Gastrocnemius medialis (tissue), 4 donors: ENCODE measurements at regions of chr10 and their contacts with region 1.

Region 1: GRCh38 chr10:73644015-73644743 is 2.9 kb upstream of the MYOZ1 start:
- DNase-seq: peak in 1 of 2 donors; percentile 9
- ATAC-seq: peak; percentile 31 to 32
- H3K4me3 ChIP-seq: peak overlapping the region in 1 of 4 donors; percentile 18
- H3K27ac ChIP-seq: peak overlapping the region; percentile 96 to 99 (median 98)
- H3K4me1 ChIP-seq: peaks cover 77 to 81% of the 10 kb centered on the region in 2 donors
- H3K27me3 ChIP-seq: no peaks in the 10 kb centered on the region
- CTCF ChIP-seq: peak; percentile 88 to 96 (median 90)
- POLR2A ChIP-seq: no peak

Region 2: DNA sequence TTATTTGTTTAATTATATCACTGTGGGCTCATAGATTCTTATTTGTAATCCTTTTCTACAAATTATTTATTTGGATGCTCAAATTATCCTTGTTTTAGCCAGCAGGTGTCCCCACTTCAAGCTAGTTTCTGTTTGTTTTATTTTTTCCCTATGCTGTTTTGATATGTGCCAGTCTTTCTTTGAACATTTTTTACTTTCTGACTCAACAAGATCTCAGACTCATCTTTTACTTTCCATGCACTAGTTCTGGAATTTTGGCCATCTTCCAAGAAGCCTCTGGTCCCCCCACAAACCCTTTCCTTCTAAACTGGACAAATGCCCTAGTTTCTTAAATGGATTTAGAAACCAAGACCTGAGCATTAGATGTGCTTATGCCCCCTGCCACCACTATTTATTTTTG is 380.2 kb before region 1 on chr10:
- in situ Hi-C with region 1: loop called in 1 of 4 experiments (anchors 25 kb)
- intact Hi-C with region 1: loop called (anchors 10 kb)
- DNase-seq: no peak
- ATAC-seq: no peak
- H3K4me3 ChIP-seq: no peak overlapping the region
- H3K27ac ChIP-seq: no peak overlapping the region
- H3K4me1 ChIP-seq: no peaks in the 10 kb centered on the region
- H3K27me3 ChIP-seq: no peaks in the 10 kb centered on the region
- CTCF ChIP-seq: peak in 4 of 5 experiments; percentile 16 to 46 (median 30)
- POLR2A ChIP-seq: no peak

Region 3: DNA sequence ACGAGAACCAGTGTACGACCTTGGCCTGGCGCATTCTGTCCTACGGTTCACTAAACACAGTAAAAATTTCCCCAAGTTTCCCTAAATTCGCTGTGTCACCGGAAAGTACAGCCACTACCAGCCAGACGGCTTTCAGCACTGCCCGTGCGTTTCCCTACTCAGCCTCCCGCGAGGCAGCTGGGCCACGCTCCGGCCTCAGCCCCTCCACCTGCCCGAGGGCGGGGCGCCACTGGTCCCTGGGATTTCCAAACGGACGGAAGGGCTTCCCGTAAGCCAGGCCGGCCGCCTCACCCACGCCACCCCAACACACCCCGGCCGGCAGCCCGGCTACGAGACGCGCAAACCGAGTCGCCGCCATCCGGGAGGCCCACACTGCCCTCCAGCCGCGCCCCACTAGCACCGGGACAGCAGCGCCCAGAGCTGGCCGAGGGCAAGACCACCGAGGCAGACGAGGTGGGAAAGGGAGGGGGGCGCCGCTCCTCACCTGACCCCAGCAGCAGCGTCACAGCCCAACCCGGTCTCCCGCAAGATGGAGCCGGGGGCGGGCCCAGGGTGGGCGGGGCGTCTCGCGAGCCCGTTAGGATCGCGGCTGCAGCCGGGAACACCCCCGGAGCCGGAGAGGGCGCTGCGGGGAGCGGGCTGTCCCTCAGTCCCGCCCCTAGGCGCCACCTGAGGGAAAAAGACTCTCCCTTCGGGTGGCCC is 230.5 kb before region 1 on chr10 and contains the start of gene ANXA7:
- in situ Hi-C with region 1: no loop called
- intact Hi-C with region 1: loop called (anchors 5 kb)
- DNase-seq: peak; percentile 89 to 93
- ATAC-seq: peak; percentile 82
- H3K4me3 ChIP-seq: peak within 1 kb of the TSS; percentile 80 to 96 (median 93)
- H3K27ac ChIP-seq: peak within 1 kb of the TSS; percentile 92 to 99 (median 98)
- H3K4me1 ChIP-seq: peaks cover 47 to 52% of the 10 kb centered on the region in 2 donors
- H3K27me3 ChIP-seq: no peaks in the 10 kb centered on the region
- CTCF ChIP-seq: peak in 2 of 5 experiments; percentile 60 to 61
- POLR2A ChIP-seq: peak; percentile 82 to 87
- total RNA-seq, gene ANXA7: 169 to 203 (median 186) TPM

Region 4: DNA sequence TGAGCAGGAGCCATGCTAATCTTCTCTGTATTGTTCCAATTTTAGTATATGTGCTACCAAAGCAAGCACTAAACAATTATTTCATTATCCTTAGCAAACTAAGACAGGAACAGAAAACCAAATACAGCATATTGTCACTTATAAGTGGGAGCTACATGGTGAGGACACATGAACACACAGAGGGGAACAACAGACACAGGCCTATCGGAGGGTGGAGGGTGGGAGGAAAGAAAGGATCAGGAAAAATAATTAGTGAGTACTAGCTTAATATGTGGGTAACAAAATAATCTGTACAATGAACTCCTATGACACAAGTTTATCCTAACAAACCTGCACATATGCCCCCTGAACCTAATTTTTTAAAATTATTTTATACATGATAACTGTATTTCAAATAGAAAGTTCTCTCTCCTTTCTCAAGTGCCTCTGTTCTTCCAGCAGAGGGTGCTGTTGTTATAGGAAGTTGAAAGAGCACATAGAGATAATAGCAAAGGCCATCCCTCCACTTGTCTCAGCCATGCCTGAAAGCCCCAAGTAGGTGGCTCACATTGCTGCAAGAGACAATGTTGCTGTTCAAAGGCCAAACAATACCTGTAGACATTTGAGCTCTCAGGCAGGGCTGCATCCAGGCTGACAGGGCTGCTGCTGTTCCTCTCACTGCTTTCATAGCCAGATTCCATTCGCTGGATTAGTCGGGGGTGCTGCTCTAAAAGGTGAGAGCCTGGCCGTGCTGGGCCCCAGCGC is 114.9 kb before region 1 on chr10:
- in situ Hi-C with region 1: loop called (anchors 5 kb)
- intact Hi-C with region 1: loop called (anchors 1 kb)
- DNase-seq: peak; percentile 15 to 65
- ATAC-seq: peak; percentile 67 to 91
- H3K4me3 ChIP-seq: no peak overlapping the region
- H3K27ac ChIP-seq: peak overlapping the region; percentile 51 to 78 (median 58)
- H3K4me1 ChIP-seq: peaks cover 18 to 25% of the 10 kb centered on the region in 2 donors
- H3K27me3 ChIP-seq: no peaks in the 10 kb centered on the region
- CTCF ChIP-seq: peak; percentile 77 to 89 (median 86)
- POLR2A ChIP-seq: no peak

Region 5: GRCh38 chr10:73534857-73535256 is 109.3 kb before region 1 on chr10:
- in situ Hi-C with region 1: loop called in 3 of 4 experiments (anchors 5 kb)
- intact Hi-C with region 1: no loop called
- DNase-seq: no peak
- ATAC-seq: no peak
- H3K4me3 ChIP-seq: no peak overlapping the region
- H3K27ac ChIP-seq: peak overlapping the region in 3 of 4 donors; percentile 19 to 76 (median 37)
- H3K4me1 ChIP-seq: peaks cover 21 to 36% of the 10 kb centered on the region in 2 donors
- H3K27me3 ChIP-seq: no peaks in the 10 kb centered on the region
- CTCF ChIP-seq: no peak
- POLR2A ChIP-seq: no peak

Region 6: GRCh38 chr10:73623056-73623455 is 21.1 kb before region 1 on chr10:
- in situ Hi-C with region 1: no loop called
- intact Hi-C with region 1: no loop called
- DNase-seq: no peak
- ATAC-seq: no peak
- H3K4me3 ChIP-seq: no peak overlapping the region
- H3K27ac ChIP-seq: no peak overlapping the region
- H3K4me1 ChIP-seq: peaks cover 6 to 17% of the 10 kb centered on the region in 2 donors
- H3K27me3 ChIP-seq: no peaks in the 10 kb centered on the region
- CTCF ChIP-seq: no peak
- POLR2A ChIP-seq: no peak